H1 (cell line): ENCODE measurements at regions of chr17 and their contacts with region 1.

Region 1: GRCh38 chr17:50560185-50560824 is at the start of gene CACNA1G:
- DNase-seq: peak; percentile 90 to 99
- H3K4me3 ChIP-seq: peak within 1 kb of the TSS; percentile 35 to 63 (median 51)
- H3K27ac ChIP-seq: no peak within 1 kb of the TSS
- H3K4me1 ChIP-seq: peaks cover 0 to 33% (median 19%) of the 10 kb centered on the region in 4 experiments; a peak in 6 of 7 replicates
- H3K27me3 ChIP-seq: peaks cover 25 to 71% (median 63%) of the 10 kb centered on the region in 4 experiments
- CTCF ChIP-seq: no peak
- EP300 ChIP-seq: no peak
- POLR2A ChIP-seq: peak in 1 of 2 experiments; percentile 48; a peak in 1 of 3 replicates
- RAD21 ChIP-seq: no peak
- total RNA-seq, gene CACNA1G: 4.8 and 4.9 TPM in 2 replicates

Region 2: DNA sequence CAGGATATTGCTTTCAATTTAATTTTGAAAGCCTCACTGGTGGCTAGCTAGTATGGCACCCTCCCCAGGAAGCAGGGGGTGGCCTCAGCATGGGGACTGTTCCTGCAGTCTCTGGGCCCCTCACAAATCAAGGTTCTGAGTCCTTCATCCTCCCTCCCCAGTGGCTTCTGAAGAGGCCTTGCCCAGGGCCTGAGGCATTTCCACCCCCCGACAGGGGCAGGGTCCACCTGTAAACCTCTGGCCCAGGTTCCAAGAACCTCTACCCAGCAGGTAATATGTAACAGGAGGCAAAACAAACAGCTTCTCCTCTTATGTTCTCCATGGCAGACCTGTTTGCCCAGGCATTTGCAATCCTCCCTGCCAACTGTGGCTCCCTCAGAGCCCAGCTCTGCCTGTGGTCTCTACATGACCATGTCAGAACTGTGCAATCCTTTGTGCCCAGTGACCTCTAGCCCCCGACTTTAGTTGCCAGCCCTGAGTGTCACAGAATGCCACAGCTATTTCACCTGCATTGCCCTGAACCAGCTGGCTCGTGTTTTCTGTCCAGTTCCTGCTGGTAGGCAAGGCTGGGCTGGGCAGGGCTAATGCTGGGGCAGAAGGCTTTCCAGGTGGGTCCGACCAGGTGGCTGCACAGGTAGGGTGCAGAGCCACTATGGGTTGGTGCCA is 120.0 kb before region 1 on chr17:
- CTCF ChIA-PET with region 1: no interaction called
- POLR2A ChIA-PET with region 1: no interaction called
- DNase-seq: no peak
- H3K4me3 ChIP-seq: no peak overlapping the region
- H3K27ac ChIP-seq: no peak overlapping the region; the same call in none of the 2 replicates
- H3K4me1 ChIP-seq: peaks cover 0 to 6% (median 0%) of the 10 kb centered on the region in 4 experiments; a peak in 2 of 7 replicates
- H3K27me3 ChIP-seq: no peaks in the 10 kb centered on the region; a peak in 1 of 7 replicates
- CTCF ChIP-seq: no peak
- EP300 ChIP-seq: no peak
- POLR2A ChIP-seq: no peak
- RAD21 ChIP-seq: no peak

Region 3: DNA sequence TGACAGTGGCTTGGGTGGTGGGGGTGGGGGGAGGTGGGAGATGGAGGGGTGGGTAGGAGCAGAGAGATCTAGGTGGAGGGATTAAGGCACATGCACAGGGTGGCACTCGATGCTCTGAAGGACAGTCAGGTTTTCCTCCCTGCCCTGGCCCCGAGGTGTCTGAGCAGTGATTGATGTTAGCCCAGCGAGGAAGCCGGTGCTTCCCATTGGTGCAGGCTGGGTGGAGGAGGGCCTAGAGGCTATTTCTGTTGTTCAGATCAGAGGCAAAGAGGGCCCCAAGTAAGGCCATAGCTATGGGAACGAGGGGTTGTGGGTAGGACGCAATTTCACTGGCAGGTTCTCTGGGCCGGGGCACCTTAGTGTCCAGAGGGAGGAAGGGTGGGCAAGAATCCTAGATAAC is 23.3 kb after region 1 on chr17:
- CTCF ChIA-PET with region 1: interaction called, 10 read pairs
- POLR2A ChIA-PET with region 1: interaction called, 5 read pairs
- DNase-seq: no peak
- H3K4me3 ChIP-seq: no peak overlapping the region
- H3K27ac ChIP-seq: no peak overlapping the region
- H3K4me1 ChIP-seq: peaks cover 0 to 22% (median 9%) of the 10 kb centered on the region in 4 experiments; a peak in 6 of 7 replicates
- H3K27me3 ChIP-seq: no peaks in the 10 kb centered on the region; a peak in 1 of 7 replicates
- CTCF ChIP-seq: no peak
- EP300 ChIP-seq: no peak
- POLR2A ChIP-seq: no peak
- RAD21 ChIP-seq: no peak

Region 4: GRCh38 chr17:50596191-50597037 is 36.1 kb after region 1 on chr17:
- CTCF ChIA-PET with region 1: interaction called, 25 read pairs
- POLR2A ChIA-PET with region 1: no interaction called
- DNase-seq: peak; percentile 38 to 88
- H3K4me3 ChIP-seq: no peak overlapping the region
- H3K27ac ChIP-seq: no peak overlapping the region
- H3K4me1 ChIP-seq: peaks cover 0 to 12% (median 7%) of the 10 kb centered on the region in 4 experiments; a peak in 6 of 7 replicates
- H3K27me3 ChIP-seq: no peaks in the 10 kb centered on the region; a peak in 1 of 7 replicates
- CTCF ChIP-seq: peak; percentile 74 to 83 (median 79)
- EP300 ChIP-seq: no peak
- POLR2A ChIP-seq: no peak
- RAD21 ChIP-seq: peak; percentile 37 to 68

Region 5: GRCh38 chr17:50604513-50604912 is 44.2 kb after region 1 on chr17:
- CTCF ChIA-PET with region 1: interaction called, 25 read pairs
- POLR2A ChIA-PET with region 1: no interaction called
- DNase-seq: no peak
- H3K4me3 ChIP-seq: no peak overlapping the region
- H3K27ac ChIP-seq: no peak overlapping the region
- H3K4me1 ChIP-seq: peaks cover 0 to 15% (median 4%) of the 10 kb centered on the region in 4 experiments; a peak in 5 of 7 replicates
- H3K27me3 ChIP-seq: no peaks in the 10 kb centered on the region
- CTCF ChIP-seq: no peak
- EP300 ChIP-seq: no peak
- POLR2A ChIP-seq: no peak
- RAD21 ChIP-seq: no peak

Region 6: DNA sequence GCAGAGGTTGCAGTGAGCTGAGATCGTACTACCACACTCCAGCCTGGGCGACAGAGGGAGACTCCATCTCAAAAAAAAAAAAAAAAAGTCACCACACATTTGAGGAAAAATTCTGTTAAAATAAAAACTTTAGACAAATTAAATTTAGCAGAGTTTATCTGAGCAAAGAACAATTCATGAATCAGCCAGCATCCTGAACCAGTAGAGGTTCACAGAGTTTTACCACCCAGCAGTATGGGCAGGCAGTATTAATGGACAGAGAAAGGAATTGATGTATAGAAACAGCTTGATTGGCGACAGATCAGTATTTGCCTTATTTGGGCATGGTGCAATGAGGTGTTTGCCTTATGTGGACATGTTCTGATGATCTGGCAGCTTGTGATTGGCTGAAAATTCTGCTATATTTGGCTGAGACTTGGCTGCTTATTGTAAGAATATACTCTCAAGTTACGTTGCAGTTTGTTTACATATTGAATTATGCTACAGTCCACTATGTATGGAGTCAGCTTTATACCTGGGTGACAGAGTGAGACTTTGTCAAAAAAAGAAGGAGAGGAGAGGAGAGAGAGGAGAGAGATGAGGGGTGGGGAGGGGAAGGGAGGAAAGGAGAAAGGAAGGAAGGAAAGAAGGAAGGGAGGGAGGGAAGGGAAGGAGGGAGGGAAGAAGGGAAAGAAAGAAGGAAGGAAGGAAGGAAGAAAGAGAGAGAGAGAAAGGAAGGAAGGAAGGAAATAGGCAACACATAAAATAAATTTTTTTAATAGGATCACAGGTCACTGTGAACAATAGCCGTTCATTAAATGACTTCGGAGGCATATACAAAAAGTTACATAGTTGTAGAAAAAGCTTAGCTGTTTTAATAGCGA is 89.0 kb after region 1 on chr17:
- CTCF ChIA-PET with region 1: no interaction called
- POLR2A ChIA-PET with region 1: no interaction called
- DNase-seq: no peak
- H3K4me3 ChIP-seq: no peak overlapping the region
- H3K27ac ChIP-seq: no peak overlapping the region
- H3K4me1 ChIP-seq: no peaks in the 10 kb centered on the region
- H3K27me3 ChIP-seq: no peaks in the 10 kb centered on the region
- CTCF ChIP-seq: no peak
- EP300 ChIP-seq: no peak
- POLR2A ChIP-seq: no peak
- RAD21 ChIP-seq: no peak